ENCODE measurements at regions of chr1 and their contacts with region 1.

Region 1: DNA sequence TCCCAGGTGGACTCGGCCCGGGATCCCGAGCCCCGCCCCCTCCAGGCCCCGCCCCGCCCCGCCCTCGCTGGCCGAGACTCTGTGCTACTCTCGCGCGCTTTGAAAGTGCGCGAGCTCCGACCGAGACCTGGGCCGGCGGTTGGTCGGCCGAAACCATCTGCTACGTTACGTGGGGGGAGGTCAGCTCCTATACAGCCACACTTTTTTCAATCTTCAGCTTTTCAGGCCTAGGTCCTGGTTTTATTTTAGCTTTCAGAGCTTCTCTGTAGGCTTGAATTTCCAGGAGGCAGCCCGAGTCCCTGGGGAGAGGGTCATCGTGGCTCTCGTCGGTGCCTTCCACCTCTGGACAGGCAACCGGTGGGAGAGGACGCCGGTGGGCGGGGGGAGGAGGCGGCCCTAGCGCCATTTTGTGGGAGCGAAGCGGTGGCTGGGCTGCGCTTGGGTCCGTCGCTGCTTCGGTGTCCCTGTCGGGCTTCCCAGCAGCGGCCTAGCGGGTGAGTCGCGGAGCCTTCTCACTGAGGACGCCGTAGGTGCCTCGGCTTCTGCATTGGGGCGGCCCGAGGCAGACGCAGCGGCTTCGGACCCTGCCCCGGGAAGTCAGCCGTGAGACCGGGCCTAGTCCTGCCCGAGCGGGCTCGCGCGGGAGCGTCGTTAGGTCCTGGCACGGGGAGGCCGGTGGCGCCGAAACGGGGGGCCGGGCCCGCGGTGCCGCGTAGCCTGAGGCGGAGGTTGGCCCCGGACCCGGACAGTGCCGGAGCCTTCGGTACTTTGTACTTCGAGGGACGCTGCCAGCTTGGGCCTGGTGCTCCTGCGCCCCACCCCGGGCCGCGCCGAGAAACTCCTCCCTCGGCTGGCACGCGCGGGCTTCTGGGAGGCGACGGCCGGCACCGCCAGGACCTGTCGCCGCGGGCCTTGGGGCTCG is at the start of gene TARDBP:
- DNase-seq: peak; percentile 29 to 91
- H3K4me3 ChIP-seq: peak within 1 kb of the TSS; percentile 98 to 99
- H3K27ac ChIP-seq: peak within 1 kb of the TSS; percentile 96 to 97
- H3K4me1 ChIP-seq: peaks cover 14 to 22% of the 10 kb centered on the region in 2 donors
- H3K27me3 ChIP-seq: no peaks in the 10 kb centered on the region
- CTCF ChIP-seq: no peak
- total RNA-seq, gene TARDBP: 83.5 TPM

Region 2: GRCh38 chr1:10851024-10852013 is 161.2 kb before region 1 on chr1:
- intact Hi-C with region 1: no loop called
- DNase-seq: no peak
- H3K4me3 ChIP-seq: no peak overlapping the region
- H3K27ac ChIP-seq: no peak overlapping the region
- H3K4me1 ChIP-seq: no peaks in the 10 kb centered on the region
- H3K27me3 ChIP-seq: no peaks in the 10 kb centered on the region
- CTCF ChIP-seq: no peak

Region 3: GRCh38 chr1:10965546-10966226 is 46.8 kb before region 1 on chr1:
- intact Hi-C with region 1: no loop called
- DNase-seq: no peak
- H3K4me3 ChIP-seq: no peak overlapping the region
- H3K27ac ChIP-seq: no peak overlapping the region
- H3K4me1 ChIP-seq: no peaks in the 10 kb centered on the region
- H3K27me3 ChIP-seq: no peaks in the 10 kb centered on the region
- CTCF ChIP-seq: no peak

Region 4: GRCh38 chr1:10980094-10980577 is 32.4 kb before region 1 on chr1:
- intact Hi-C with region 1: loop called (anchors 1 kb)
- DNase-seq: peak; percentile 38 to 90
- H3K4me3 ChIP-seq: peak overlapping the region; percentile 33 to 58
- H3K27ac ChIP-seq: peak overlapping the region; percentile 58 to 67
- H3K4me1 ChIP-seq: peaks cover 10 to 17% of the 10 kb centered on the region in 2 donors
- H3K27me3 ChIP-seq: no peaks in the 10 kb centered on the region
- CTCF ChIP-seq: peak; percentile 11 to 48 (median 36)

Region 5: GRCh38 chr1:11262171-11263049 is 249.9 kb after region 1 on chr1 and contains the start of gene MTOR:
- intact Hi-C with region 1: loop called (anchors 5 kb)
- DNase-seq: peak; percentile 98 to 100
- H3K4me3 ChIP-seq: peak within 1 kb of the TSS; percentile 75 to 84
- H3K27ac ChIP-seq: peak within 1 kb of the TSS; percentile 59 to 67
- H3K4me1 ChIP-seq: peaks cover 5 to 11% of the 10 kb centered on the region in 2 donors
- H3K27me3 ChIP-seq: no peaks in the 10 kb centered on the region
- CTCF ChIP-seq: peak in 1 of 3 experiments; percentile 7
- total RNA-seq, gene MTOR: 28.0 TPM